H1 (cell line): ENCODE measurements at regions of chr7 and their contacts with region 1.

Region 1: GRCh38 chr7:105876091-105876963 is at the start of gene ATXN7L1:
- DNase-seq: peak; percentile 90 to 96
- H3K4me3 ChIP-seq: peak within 1 kb of the TSS; percentile 87 to 93 (median 90)
- H3K27ac ChIP-seq: peak within 1 kb of the TSS; percentile 91
- H3K4me1 ChIP-seq: peaks cover 6 to 27% (median 15%) of the 10 kb centered on the region in 4 experiments; a peak in 5 of 7 replicates
- H3K27me3 ChIP-seq: peaks cover 0 to 14% (median 12%) of the 10 kb centered on the region in 4 experiments; a peak in 5 of 7 replicates
- CTCF ChIP-seq: peak; percentile 50 to 57 (median 55); a peak in 3 of 4 replicates
- EP300 ChIP-seq: no peak
- POLR2A ChIP-seq: peak; percentile 79 to 89
- RAD21 ChIP-seq: peak; percentile 1 to 46; a peak in 2 of 4 replicates
- total RNA-seq, gene ATXN7L1: 34.0 and 34.5 TPM in 2 replicates

Region 2: GRCh38 chr7:105493923-105494315 is 382.4 kb before region 1 on chr7:
- CTCF ChIA-PET with region 1: no interaction called
- POLR2A ChIA-PET with region 1: no interaction called
- DNase-seq: no peak
- H3K4me3 ChIP-seq: no peak overlapping the region
- H3K27ac ChIP-seq: no peak overlapping the region
- H3K4me1 ChIP-seq: no peaks in the 10 kb centered on the region
- H3K27me3 ChIP-seq: no peaks in the 10 kb centered on the region
- CTCF ChIP-seq: no peak
- EP300 ChIP-seq: no peak
- POLR2A ChIP-seq: no peak
- RAD21 ChIP-seq: no peak

Region 3: DNA sequence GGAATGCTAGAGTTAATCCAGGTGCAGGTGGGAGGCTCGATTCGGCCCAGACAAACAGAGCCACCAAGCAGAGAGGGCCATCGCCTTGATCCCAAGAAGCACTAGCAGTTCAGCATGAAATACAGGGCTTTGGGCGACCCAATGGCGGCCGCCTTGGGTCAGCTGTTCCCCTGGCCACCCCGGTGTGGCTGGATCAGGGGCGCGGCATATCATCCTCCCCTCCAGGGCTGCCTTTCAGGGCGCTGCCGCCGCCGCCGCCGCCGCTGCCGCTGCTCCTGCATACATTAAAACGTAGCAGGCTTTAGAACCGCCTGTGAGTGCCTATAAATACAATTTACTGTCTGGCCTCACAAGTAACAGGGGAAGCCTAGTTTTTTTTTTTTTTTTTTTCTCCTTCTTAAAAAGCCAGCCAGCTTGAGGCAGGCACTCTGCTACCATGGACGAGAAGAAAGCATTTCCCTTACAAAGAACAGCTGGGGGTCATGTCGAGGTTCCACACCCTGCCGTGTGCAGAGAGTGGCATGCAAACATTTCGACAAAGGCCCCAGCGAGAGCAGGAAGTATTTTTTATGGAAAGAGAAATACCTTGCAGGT is 237.3 kb before region 1 on chr7:
- CTCF ChIA-PET with region 1: interaction called, 10 read pairs
- POLR2A ChIA-PET with region 1: no interaction called
- DNase-seq: peak; percentile 80 to 81
- H3K4me3 ChIP-seq: peak overlapping the region; percentile 25 to 67 (median 59); a peak in 7 of 8 replicates
- H3K27ac ChIP-seq: peak overlapping the region; percentile 94
- H3K4me1 ChIP-seq: peaks cover 31 to 65% (median 39%) of the 10 kb centered on the region in 4 experiments
- H3K27me3 ChIP-seq: no peaks in the 10 kb centered on the region
- CTCF ChIP-seq: no peak
- EP300 ChIP-seq: peak in 1 of 2 experiments; percentile 74; a peak in 1 of 3 replicates
- POLR2A ChIP-seq: peak; percentile 17 to 43
- RAD21 ChIP-seq: no peak

Region 4: GRCh38 chr7:105808703-105809590 is 67.4 kb before region 1 on chr7:
- CTCF ChIA-PET with region 1: interaction called, 12 read pairs
- POLR2A ChIA-PET with region 1: interaction called, 3 read pairs
- DNase-seq: no peak
- H3K4me3 ChIP-seq: no peak overlapping the region
- H3K27ac ChIP-seq: no peak overlapping the region
- H3K4me1 ChIP-seq: peaks cover 6 to 14% (median 9%) of the 10 kb centered on the region in 4 experiments; a peak in 5 of 7 replicates
- H3K27me3 ChIP-seq: no peaks in the 10 kb centered on the region
- CTCF ChIP-seq: no peak
- EP300 ChIP-seq: no peak
- POLR2A ChIP-seq: no peak
- RAD21 ChIP-seq: no peak

Region 5: GRCh38 chr7:105849122-105849855 is 27.0 kb before region 1 on chr7:
- CTCF ChIA-PET with region 1: interaction called, 26 read pairs
- POLR2A ChIA-PET with region 1: no interaction called
- DNase-seq: peak in 1 of 2 experiments; percentile 80
- H3K4me3 ChIP-seq: 0 out of 8 replicates have a peak overlapping the region, but pooled peaks of 1 of the 4 experiments have one; percentile 12
- H3K27ac ChIP-seq: no peak overlapping the region
- H3K4me1 ChIP-seq: peaks cover 15 to 28% (median 19%) of the 10 kb centered on the region in 4 experiments
- H3K27me3 ChIP-seq: no peaks in the 10 kb centered on the region
- CTCF ChIP-seq: no peak
- EP300 ChIP-seq: peak in 1 of 2 experiments; percentile 67; a peak in 1 of 3 replicates
- POLR2A ChIP-seq: 0 out of 3 replicates have a peak, but pooled peaks of 1 of the 2 experiments have one; percentile 38
- RAD21 ChIP-seq: peak; percentile 3 to 8; a peak in 2 of 4 replicates

Region 6: GRCh38 chr7:106166655-106167342 is 290.5 kb after region 1 on chr7:
- CTCF ChIA-PET with region 1: no interaction called
- POLR2A ChIA-PET with region 1: no interaction called
- DNase-seq: no peak
- H3K4me3 ChIP-seq: no peak overlapping the region
- H3K27ac ChIP-seq: no peak overlapping the region
- H3K4me1 ChIP-seq: no peaks in the 10 kb centered on the region
- H3K27me3 ChIP-seq: no peaks in the 10 kb centered on the region
- CTCF ChIP-seq: peak in 2 of 3 experiments; percentile 61 to 80; a peak in 2 of 4 replicates
- EP300 ChIP-seq: no peak
- POLR2A ChIP-seq: no peak
- RAD21 ChIP-seq: peak; percentile 81 to 82